Activated T-helper 1 cell treated with anti-CD3 and anti-CD28 coated beads, Interleukin-12 subunit alpha, Interleukin-12 subunit beta, Interleukin-2, Interleukin-4 antibody, amounts not matched to agents 30 ng/mL and 10 ng/mL and 1 ng/mL, durations not matched to agents 14 hours and 24 hours and 36 hours (primary cell): ENCODE measurements at regions of chr2 and their contacts with region 1.

Region 1: GRCh38 chr2:84925724-84926376 is 20.4 kb downstream of the TMSB10 start:
- DNase-seq: peak; percentile 95
- H3K4me3 Mint-ChIP-seq: peak overlapping the region; percentile 96
- H3K27ac Mint-ChIP-seq: peak overlapping the region; percentile 95
- H3K4me1 Mint-ChIP-seq: peaks cover 46% of the 10 kb centered on the region
- H3K27me3 Mint-ChIP-seq: no peaks in the 10 kb centered on the region

Region 2: GRCh38 chr2:84516234-84516986 is 409.4 kb before region 1 on chr2 and contains the start of gene DNAH6:
- intact Hi-C with region 1: loop called (anchors 1 kb)
- DNase-seq: peak; percentile 84
- H3K4me3 Mint-ChIP-seq: peak within 1 kb of the TSS; percentile 82
- H3K27ac Mint-ChIP-seq: peak within 1 kb of the TSS; percentile 68
- H3K4me1 Mint-ChIP-seq: peaks cover 27% of the 10 kb centered on the region
- H3K27me3 Mint-ChIP-seq: peaks cover 26% of the 10 kb centered on the region
- total RNA-seq, gene DNAH6: 0.12 and 0.16 TPM in 2 replicates

Region 3: GRCh38 chr2:84817239-84817655 is 108.6 kb before region 1 on chr2:
- intact Hi-C with region 1: loop called (anchors 2 kb)
- DNase-seq: no peak
- H3K4me3 Mint-ChIP-seq: no peak overlapping the region
- H3K27ac Mint-ChIP-seq: peak overlapping the region; percentile 45
- H3K4me1 Mint-ChIP-seq: peaks cover 29% of the 10 kb centered on the region
- H3K27me3 Mint-ChIP-seq: no peaks in the 10 kb centered on the region

Region 4: GRCh38 chr2:84894758-84895520 is 30.9 kb before region 1 on chr2:
- intact Hi-C with region 1: no loop called
- DNase-seq: no peak
- H3K4me3 Mint-ChIP-seq: peak overlapping the region; percentile 56
- H3K27ac Mint-ChIP-seq: peak overlapping the region; percentile 85
- H3K4me1 Mint-ChIP-seq: peaks cover 75% of the 10 kb centered on the region
- H3K27me3 Mint-ChIP-seq: no peaks in the 10 kb centered on the region

Region 5: GRCh38 chr2:84905181-84906107 is 20.4 kb before region 1 on chr2 and contains the start of gene TMSB10:
- intact Hi-C with region 1: loop called (anchors 1 kb)
- DNase-seq: peak; percentile 88
- H3K4me3 Mint-ChIP-seq: peak within 1 kb of the TSS; percentile 97
- H3K27ac Mint-ChIP-seq: peak within 1 kb of the TSS; percentile 95
- H3K4me1 Mint-ChIP-seq: peaks cover 78% of the 10 kb centered on the region
- H3K27me3 Mint-ChIP-seq: no peaks in the 10 kb centered on the region
- total RNA-seq, gene TMSB10: 2,415 and 2,510 TPM in 2 replicates

Region 6: GRCh38 chr2:84970868-84971509 is 45.1 kb after region 1 on chr2 and contains the start of gene KCMF1:
- intact Hi-C with region 1: loop called (anchors 1 kb)
- DNase-seq: peak; percentile 67
- H3K4me3 Mint-ChIP-seq: peak within 1 kb of the TSS; percentile 100
- H3K27ac Mint-ChIP-seq: peak within 1 kb of the TSS; percentile 100
- H3K4me1 Mint-ChIP-seq: peaks cover 43% of the 10 kb centered on the region
- H3K27me3 Mint-ChIP-seq: no peaks in the 10 kb centered on the region
- total RNA-seq, gene KCMF1: 98.1 and 108 TPM in 2 replicates